ENCODE measurements at regions of chr15 and their contacts with region 1.

Region 1: DNA sequence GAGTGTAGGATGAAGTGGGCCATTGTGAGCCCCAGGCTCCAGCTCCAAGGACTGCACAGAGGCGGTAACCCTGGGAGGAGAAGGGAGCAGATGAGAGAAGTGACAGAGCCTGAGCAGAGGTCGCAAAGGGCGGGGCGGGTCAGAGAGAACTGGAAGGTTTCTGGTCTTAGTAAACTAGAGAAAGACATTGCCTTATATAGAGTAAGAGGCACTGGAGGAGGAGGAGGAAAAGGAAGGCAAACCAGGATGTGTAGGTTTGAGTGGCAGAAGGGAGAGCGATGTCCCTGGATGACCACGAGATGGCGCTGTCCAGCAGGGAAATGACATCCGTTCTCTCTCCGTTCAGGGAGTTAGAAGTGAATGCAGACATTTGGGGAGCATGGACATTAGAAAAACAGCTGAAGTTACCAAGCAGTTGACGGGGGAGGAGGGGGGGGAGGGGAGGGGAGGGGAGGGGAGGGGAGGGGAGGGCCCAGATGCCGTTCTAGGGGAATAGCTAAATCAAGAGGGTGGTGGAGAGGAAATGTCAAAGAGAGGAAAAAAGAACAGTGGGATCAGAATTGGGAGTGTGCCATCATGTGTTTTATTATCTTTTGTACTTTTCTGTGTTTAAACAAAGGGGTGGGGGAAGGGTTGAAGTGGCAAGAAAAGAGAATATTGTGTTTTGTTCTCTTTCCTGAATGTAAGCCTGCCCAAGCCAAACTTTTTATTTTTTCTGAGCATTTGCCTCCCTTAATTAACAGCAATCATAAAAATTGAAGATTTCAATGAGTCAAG is 48.8 kb downstream of the STARD5 start:
- DNase-seq: peak; percentile 88
- H3K4me3 ChIP-seq: no peak overlapping the region
- H3K27ac ChIP-seq: peak overlapping the region; percentile 45 to 64 (median 52)
- H3K4me1 ChIP-seq: peaks cover 4 to 26% (median 13%) of the 10 kb centered on the region in 4 donors
- H3K27me3 ChIP-seq: no peaks in the 10 kb centered on the region
- CTCF ChIP-seq: peak; percentile 80 to 95 (median 85)
- EP300 ChIP-seq: no peak
- POLR2A ChIP-seq: no peak

Region 2: GRCh38 chr15:81336568-81336967 is 61.4 kb after region 1 on chr15:
- in situ Hi-C with region 1: loop called in 1 of 4 experiments (anchors 5 kb)
- intact Hi-C with region 1: no loop called
- DNase-seq: no peak
- H3K4me3 ChIP-seq: no peak overlapping the region
- H3K27ac ChIP-seq: no peak overlapping the region
- H3K4me1 ChIP-seq: peaks cover 0 to 18% (median 7%) of the 10 kb centered on the region in 4 donors
- H3K27me3 ChIP-seq: no peaks in the 10 kb centered on the region
- CTCF ChIP-seq: peak in 1 of 5 experiments; percentile 19
- EP300 ChIP-seq: no peak
- POLR2A ChIP-seq: no peak

Region 3: DNA sequence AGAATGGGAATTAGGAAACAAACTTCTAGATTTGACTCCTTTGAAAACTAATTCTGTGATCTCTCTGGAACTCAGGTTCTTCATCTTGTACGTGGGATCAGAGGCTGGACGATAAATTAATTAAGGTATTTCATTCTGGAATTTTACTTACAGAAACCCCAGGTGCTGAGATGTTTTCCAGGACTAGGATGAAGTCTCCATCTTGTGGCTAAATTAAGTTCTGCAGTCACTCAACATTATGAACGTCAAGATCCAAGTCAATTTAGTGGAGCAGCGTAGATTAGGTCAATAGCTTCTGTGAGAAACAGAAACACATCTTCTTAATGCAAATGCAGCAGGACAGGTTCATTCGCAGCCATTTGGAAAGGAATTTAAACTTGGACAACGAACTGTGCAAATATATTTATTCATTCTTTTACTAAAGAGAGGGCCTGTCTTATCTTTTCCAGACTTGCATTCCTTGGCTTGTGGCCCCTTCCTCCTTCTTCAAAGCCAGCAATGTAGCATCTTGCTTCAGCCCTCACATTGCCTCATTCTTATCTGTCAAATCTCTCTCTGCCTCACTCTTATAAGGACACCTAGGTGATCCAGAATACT is 125.6 kb after region 1 on chr15:
- in situ Hi-C with region 1: loop called in 2 of 4 experiments (anchors 5 kb)
- intact Hi-C with region 1: loop called (anchors 5 kb)
- DNase-seq: no peak
- H3K4me3 ChIP-seq: no peak overlapping the region
- H3K27ac ChIP-seq: no peak overlapping the region
- H3K4me1 ChIP-seq: peaks cover 0 to 21% (median 0%) of the 10 kb centered on the region in 4 donors
- H3K27me3 ChIP-seq: peaks cover 4% of the 10 kb centered on the region
- CTCF ChIP-seq: peak; percentile 76 to 87 (median 84)
- EP300 ChIP-seq: no peak
- POLR2A ChIP-seq: no peak